ENCODE measurements at regions of chr19 and their contacts with region 1.

Region 1: DNA sequence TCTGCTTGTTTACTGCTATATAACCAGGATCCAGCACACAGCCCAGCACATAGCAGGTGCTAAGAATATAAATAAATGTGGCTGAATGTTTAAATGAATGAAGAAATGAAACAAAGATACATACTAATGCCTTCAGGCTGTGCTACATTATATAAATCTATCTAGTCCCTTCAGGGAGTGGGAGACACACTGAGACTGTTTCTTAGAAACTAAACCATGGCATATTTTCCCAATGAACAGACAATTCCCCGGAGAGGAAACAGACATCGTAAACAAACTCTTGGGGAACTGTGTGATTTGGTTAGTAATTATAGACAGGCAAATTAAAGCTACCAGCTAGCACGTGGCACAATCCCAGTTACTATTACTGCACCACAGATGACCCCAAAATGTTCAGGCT is 9.7 kb upstream of the FEM1A start:
- DNase-seq: no peak
- ATAC-seq: no peak
- H3K4me3 ChIP-seq: no peak overlapping the region
- H3K27ac ChIP-seq: no peak overlapping the region
- H3K4me1 ChIP-seq: peaks cover 12% of the 10 kb centered on the region
- H3K27me3 ChIP-seq: no peaks in the 10 kb centered on the region
- CTCF ChIP-seq: no peak

Region 2: GRCh38 chr19:4669723-4670480 is 111.9 kb before region 1 on chr19 and contains the start of gene MYDGF:
- intact Hi-C with region 1: loop called in 1 of 2 experiments (anchors 10 kb)
- DNase-seq: peak; percentile 95 to 98
- ATAC-seq: peak; percentile 92 to 98 (median 96)
- H3K4me3 ChIP-seq: peak within 1 kb of the TSS; percentile 70
- H3K27ac ChIP-seq: peak within 1 kb of the TSS; percentile 92
- H3K4me1 ChIP-seq: peaks cover 20% of the 10 kb centered on the region
- H3K27me3 ChIP-seq: no peaks in the 10 kb centered on the region
- CTCF ChIP-seq: no peak
- total RNA-seq, gene MYDGF: 11.4 to 24.0 (median 19.1) TPM

Region 3: DNA sequence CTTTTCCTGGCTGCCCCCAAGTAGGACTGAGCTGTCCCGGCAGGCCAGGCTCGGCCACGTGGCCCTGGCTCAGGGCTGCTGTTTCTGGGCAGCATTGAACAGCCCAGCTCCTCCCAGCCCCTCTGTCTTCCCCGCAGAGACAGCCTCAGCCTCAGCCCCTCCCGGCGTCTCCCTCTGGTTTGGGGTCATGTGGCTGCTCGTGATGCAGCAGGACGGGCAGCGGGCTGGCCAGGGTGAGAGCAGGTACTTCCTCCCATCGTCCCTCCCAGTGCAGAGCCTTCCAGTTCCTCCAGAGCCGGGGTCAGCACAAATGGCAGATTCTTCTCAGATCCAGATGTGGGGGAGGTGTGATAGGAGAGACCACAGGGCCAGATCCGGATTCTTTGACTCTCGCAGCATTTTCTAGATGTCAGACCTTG is 301.8 kb after region 1 on chr19:
- intact Hi-C with region 1: no loop called
- DNase-seq: peak; percentile 50 to 51
- ATAC-seq: no peak
- H3K4me3 ChIP-seq: no peak overlapping the region
- H3K27ac ChIP-seq: no peak overlapping the region
- H3K4me1 ChIP-seq: peaks cover 6% of the 10 kb centered on the region
- H3K27me3 ChIP-seq: no peaks in the 10 kb centered on the region
- CTCF ChIP-seq: no peak

Measured in psoas muscle (tissue), 8 donors.